Right ventricle myocardium inferior (tissue), 1 donor: ENCODE measurements at regions of chr9 and their contacts with region 1.

Region 1: GRCh38 chr9:72871685-72872084 is 81.2 kb downstream of the ALDH1A1 start:
- DNase-seq: no peak
- ATAC-seq: no peak

Region 2: GRCh38 chr9:72977670-72978069 is 106.0 kb after region 1 on chr9:
- intact Hi-C with region 1: no loop called
- DNase-seq: no peak
- ATAC-seq: no peak

Region 3: GRCh38 chr9:73023025-73023541 is 151.4 kb after region 1 on chr9:
- intact Hi-C with region 1: loop called (anchors 1 kb)
- DNase-seq: no peak
- ATAC-seq: peak; percentile 31

Region 4: DNA sequence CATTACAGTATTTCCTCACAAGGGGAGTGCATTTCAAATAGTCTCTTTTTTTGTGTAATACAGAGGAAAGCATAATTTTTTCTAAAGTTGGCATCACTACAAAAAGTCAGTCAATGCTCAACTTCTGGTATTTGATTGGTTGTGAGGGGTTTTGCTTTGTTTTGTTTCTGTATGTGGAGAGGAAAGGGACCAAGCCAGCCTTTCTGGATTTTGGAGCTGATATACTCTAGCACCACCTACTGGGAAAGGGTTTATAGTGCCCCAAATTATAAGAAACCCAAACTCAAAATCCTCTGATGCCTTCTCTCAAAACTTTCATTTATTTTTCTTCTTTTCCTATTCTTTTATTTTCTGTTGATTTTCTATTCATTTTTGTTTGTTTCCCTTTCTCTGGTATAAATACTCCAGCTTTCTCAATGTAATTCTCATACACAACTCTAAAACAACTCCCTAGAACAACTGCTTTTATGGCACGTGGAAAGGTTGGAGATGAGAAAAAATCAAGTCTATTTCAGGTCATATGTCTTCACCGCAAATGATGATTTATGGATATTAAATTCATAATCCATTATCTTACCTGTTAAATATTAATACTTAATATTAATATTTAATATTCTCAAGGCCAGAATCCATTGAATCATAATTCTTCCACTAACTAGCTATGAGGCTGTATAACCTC is 210.4 kb after region 1 on chr9:
- intact Hi-C with region 1: loop called (anchors 2 kb)
- DNase-seq: no peak
- ATAC-seq: no peak